Activated T-helper 2 cell treated with anti-CD3 and anti-CD28 coated beads, Interferon-gamma antibody, Interleukin-2, Interleukin-4, amounts not matched to agents 10 μg/mL and 5 μg/mL and 100 μg/mL, durations not matched to agents 14 hours and 24 hours and 36 hours (primary cell): ENCODE measurements at regions of chr6 and their contacts with region 1.

Region 1: DNA sequence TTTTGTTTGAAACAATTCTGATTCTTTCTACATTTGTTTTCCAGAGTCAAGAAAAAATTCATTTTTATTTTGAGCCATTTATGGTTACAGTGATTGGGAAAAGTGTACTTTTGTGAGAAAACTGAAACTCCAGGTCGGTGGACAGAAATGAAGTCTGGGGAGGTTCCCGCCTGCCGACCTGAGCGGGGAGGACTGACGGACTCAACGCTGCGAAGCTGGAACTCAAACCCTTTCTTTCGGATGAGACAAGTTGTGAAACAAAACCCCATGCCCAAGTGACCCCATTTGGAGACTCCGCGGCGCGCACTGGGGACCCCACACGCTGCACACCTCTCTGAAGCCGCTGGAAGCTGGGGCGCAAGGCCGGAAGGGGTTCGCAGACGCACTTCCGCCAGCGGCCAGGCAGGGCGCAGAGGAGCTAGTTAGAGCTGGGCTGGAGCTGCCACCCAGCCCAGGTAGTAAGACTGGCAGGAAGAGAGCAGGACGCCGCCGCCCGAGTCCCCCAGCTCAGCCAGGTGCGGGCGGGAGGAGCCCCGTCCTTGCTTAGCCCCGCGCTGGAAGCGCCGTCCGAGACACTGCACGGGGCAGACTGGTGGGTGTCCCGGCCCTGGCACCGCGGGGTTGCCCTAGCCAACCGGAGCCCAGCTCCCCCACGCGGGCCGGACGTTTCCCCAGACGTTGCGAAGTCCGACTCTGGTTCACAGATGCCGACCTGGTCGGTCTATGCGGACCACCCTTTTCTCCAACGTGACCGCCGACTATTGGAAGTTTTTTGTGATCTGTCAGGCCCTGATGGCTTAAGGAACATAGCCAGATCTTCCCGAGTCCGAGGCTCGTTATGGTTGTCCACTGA is 19.8 kb upstream of the ZSCAN16 start:
- DNase-seq: peak; percentile 76
- H3K4me3 Mint-ChIP-seq: peak overlapping the region; percentile 83
- H3K27ac Mint-ChIP-seq: peak overlapping the region; percentile 66
- H3K4me1 Mint-ChIP-seq: peaks cover 11% of the 10 kb centered on the region
- H3K27me3 Mint-ChIP-seq: peaks cover 25% of the 10 kb centered on the region

Region 2: DNA sequence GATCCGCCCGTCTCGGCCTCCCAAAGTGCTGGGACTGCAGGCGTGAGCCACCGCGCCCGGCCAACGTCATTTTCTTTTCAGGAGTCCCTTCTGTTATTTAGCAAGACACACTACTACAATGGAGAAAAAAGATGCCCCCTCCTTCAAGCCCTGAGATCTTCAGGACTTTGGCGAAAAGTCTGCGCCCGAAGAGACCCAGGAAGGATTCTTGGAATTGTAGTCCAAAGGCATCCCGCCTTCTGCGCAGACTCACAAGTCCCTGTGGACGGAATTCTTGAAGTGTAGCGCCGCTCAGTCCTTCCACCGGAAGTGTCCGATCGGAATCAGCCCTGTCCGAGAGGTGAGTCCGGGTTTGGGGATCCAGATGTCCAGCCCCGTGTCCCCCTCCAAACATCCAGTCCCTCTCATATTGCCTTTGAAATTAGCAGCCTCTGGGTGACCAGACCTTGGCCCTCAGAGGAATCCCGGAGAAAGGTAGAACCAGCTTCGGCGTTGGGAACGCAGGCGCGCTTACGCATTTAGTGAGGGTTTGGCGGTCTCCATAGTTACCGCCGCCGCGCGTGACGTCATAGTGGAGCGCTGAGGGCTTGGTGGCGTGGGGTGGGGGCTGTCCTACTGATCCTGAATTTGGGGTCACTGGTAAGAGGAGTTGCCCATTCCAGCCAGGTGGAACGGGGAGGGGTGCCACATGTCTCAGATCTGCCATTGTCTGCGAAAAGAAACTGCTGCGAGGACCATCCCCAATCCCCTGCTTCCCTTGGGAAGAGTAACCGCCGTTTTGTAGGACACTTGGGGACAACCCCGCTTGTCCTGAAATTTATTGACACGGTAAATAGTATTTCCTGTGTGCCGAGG is 23.8 kb before region 1 on chr6:
- intact Hi-C with region 1: loop called (anchors 1 kb)
- DNase-seq: peak; percentile 82
- H3K4me3 Mint-ChIP-seq: peak overlapping the region; percentile 93
- H3K27ac Mint-ChIP-seq: peak overlapping the region; percentile 93
- H3K4me1 Mint-ChIP-seq: peaks cover 13% of the 10 kb centered on the region
- H3K27me3 Mint-ChIP-seq: no peaks in the 10 kb centered on the region

Region 3: GRCh38 chr6:28124102-28124970 is 19.7 kb after region 1 on chr6 and contains the start of gene ZSCAN16:
- intact Hi-C with region 1: loop called (anchors 2 kb)
- DNase-seq: peak; percentile 68
- H3K4me3 Mint-ChIP-seq: peak within 1 kb of the TSS; percentile 92
- H3K27ac Mint-ChIP-seq: peak within 1 kb of the TSS; percentile 75
- H3K4me1 Mint-ChIP-seq: peaks cover 35% of the 10 kb centered on the region
- H3K27me3 Mint-ChIP-seq: no peaks in the 10 kb centered on the region
- total RNA-seq, gene ZSCAN16: 4.0 TPM in 2 replicates

Region 4: GRCh38 chr6:28182255-28182654 is 77.6 kb after region 1 on chr6:
- intact Hi-C with region 1: no loop called
- DNase-seq: no peak
- H3K4me3 Mint-ChIP-seq: no peak overlapping the region
- H3K27ac Mint-ChIP-seq: no peak overlapping the region
- H3K4me1 Mint-ChIP-seq: no peaks in the 10 kb centered on the region
- H3K27me3 Mint-ChIP-seq: peaks cover 2% of the 10 kb centered on the region